ENCODE measurements at regions of chr20 and their contacts with region 1.

Region 1: GRCh38 chr20:56247948-56248782 is at the start of gene MC3R:
- DNase-seq: no peak
- ATAC-seq: peak; percentile 93
- H3K4me3 ChIP-seq: no peak within 1 kb of the TSS
- H3K27ac ChIP-seq: no peak within 1 kb of the TSS
- H3K4me1 ChIP-seq: no peaks in the 10 kb centered on the region
- H3K27me3 ChIP-seq: no peaks in the 10 kb centered on the region
- CTCF ChIP-seq: peak; percentile 73 to 75 (median 75)
- EP300 ChIP-seq: no peak
- POLR2A ChIP-seq: no peak
- RAD21 ChIP-seq: peak; percentile 51
- polyA plus RNA-seq, gene MC3R: not detected

Region 2: DNA sequence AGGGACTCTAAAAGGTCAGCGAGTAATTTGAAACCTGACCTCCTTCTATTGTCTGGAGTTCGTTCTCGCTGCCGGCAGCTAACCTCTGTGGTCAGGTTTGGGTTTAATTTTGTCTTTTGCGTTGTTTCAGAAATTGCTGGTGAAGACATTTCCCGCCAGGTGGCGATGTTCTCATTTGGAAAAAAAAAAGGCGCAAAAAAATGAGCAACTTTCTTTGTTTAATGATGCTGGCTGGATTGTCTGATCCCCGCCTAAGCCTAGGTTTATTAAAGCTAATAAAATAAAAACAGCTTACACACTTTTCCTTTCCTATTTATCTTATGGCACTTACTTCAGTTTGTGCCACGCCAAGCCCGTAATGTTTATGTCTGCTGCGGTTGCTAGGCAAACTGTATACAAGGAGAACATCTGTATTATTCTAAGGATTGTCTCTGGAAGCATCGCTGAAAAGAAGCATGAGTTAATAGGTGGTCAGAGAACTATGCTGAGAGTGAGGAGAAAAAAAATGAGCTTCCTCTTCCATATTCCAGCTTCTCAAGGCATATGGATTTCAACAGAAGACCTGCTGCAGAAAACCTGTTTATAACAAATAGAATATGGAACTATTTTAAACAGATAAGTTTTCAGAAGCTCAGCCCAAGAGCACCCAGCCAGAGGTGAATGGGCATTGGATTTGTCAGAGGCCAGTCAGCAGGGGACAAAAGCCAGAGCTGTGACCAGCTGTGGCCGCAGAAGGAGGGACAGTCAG is 1567.1 kb before region 1 on chr20:
- CTCF ChIA-PET with region 1: interaction called, 3 read pairs
- POLR2A ChIA-PET with region 1: no interaction called
- RAD21 ChIA-PET with region 1: no interaction called
- SMC1A ChIA-PET with region 1: no interaction called
- in situ Hi-C with region 1: no loop called
- intact Hi-C with region 1: loop called (anchors 5 kb)
- DNase-seq: no peak
- ATAC-seq: peak; percentile 27; the same call in 1 of the 3 replicates
- H3K4me3 ChIP-seq: no peak overlapping the region
- H3K27ac ChIP-seq: no peak overlapping the region
- H3K4me1 ChIP-seq: no peaks in the 10 kb centered on the region
- H3K27me3 ChIP-seq: 0 out of 4 replicates have a peak, but pooled peaks cover 0 to 2% of the 10 kb centered on the region in 2 experiments
- CTCF ChIP-seq: peak; percentile 44 to 56 (median 49)
- EP300 ChIP-seq: no peak
- POLR2A ChIP-seq: no peak
- RAD21 ChIP-seq: peak; percentile 65

Region 3: GRCh38 chr20:56343861-56344381 is 95.8 kb after region 1 on chr20:
- CTCF ChIA-PET with region 1: interaction called, 6 read pairs
- POLR2A ChIA-PET with region 1: no interaction called
- RAD21 ChIA-PET with region 1: interaction called, 4 read pairs
- SMC1A ChIA-PET with region 1: interaction called, 6 read pairs
- in situ Hi-C with region 1: no loop called
- intact Hi-C with region 1: loop called (anchors 1 kb)
- DNase-seq: no peak
- ATAC-seq: peak; percentile 84
- H3K4me3 ChIP-seq: no peak overlapping the region
- H3K27ac ChIP-seq: no peak overlapping the region
- H3K4me1 ChIP-seq: no peaks in the 10 kb centered on the region
- H3K27me3 ChIP-seq: peaks cover 0 to 10% of the 10 kb centered on the region in 2 experiments; a peak in 2 of 4 replicates
- CTCF ChIP-seq: peak; percentile 60 to 75 (median 73)
- EP300 ChIP-seq: no peak
- POLR2A ChIP-seq: no peak
- RAD21 ChIP-seq: peak; percentile 64

Region 4: DNA sequence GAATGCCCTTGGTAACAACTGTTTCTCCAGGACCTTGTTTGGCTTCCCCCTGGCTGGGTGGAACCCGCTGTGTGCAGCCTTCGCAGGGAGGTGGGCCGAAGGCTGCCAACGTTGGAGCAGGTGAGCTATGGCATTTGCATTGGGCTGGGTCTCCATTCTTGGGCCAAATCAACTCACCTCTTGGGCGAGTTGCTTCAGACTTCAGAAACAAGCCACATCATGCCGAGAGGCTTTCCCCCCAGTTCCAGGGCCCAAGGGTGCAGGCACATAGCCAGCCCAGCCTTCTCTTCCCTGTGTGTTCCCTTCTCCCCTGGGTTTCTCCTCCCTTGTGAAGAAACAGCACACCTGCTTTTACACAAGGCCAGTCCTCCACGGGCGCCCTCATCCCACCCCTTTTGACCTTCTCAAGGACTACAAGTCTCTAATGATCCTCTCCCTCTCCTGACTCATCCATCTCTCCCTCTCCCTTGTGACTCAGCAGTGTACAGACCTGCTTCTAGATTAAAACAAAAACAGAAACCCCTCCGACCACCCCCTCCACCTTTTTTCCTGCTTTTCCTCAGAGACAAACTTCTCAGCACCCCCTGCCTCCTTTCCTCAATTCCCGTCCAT is 326.5 kb after region 1 on chr20:
- CTCF ChIA-PET with region 1: no interaction called
- POLR2A ChIA-PET with region 1: no interaction called
- RAD21 ChIA-PET with region 1: no interaction called
- SMC1A ChIA-PET with region 1: no interaction called
- in situ Hi-C with region 1: no loop called
- intact Hi-C with region 1: loop called (anchors 2 kb)
- DNase-seq: no peak
- ATAC-seq: no peak
- H3K4me3 ChIP-seq: no peak overlapping the region
- H3K27ac ChIP-seq: no peak overlapping the region
- H3K4me1 ChIP-seq: no peaks in the 10 kb centered on the region
- H3K27me3 ChIP-seq: no peaks in the 10 kb centered on the region; a peak in 2 of 4 replicates
- CTCF ChIP-seq: no peak
- EP300 ChIP-seq: no peak
- POLR2A ChIP-seq: no peak
- RAD21 ChIP-seq: no peak

Measured in GM12878 (cell line).